AG04449 (cell line): ENCODE measurements at regions of chr4 and their contacts with region 1.

Region 1: DNA sequence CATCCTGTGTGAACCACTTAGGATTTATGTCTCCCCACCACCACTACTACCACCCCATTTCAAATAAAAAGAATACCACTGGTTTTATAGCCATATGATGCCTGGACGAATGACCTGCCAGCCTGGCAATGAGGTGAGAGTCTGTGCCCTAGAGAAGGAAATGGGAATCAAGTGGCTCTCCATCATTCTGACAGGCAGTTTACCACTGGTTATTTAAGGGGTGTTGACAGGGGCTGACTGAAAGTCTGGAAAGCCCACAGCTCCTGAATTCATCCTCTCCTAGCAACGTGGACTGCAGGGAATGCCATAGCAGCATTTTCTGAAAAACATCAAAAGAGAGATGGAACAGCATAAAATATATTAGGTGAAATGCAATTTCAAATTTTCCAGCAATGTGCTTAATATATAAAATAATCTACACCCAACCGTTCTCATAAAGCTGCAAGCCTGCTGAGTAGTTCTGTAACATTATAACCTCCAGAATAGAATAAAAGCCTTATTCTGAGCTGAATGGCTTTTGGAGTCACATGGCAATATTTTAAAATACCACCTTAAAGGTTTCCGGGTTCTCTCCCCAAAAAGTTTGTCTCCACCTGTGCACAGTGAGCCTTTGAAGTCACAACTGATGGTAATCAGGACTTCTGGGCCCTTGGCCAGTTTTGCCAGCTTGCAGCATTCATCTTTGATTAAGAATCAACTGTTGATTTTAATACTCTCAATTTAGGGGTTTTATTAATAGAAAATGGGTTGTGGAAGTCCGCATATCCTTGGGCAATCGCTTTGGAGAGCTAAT is 121.5 kb downstream of the DCTD start:
- DNase-seq: no peak
- H3K4me3 ChIP-seq: no peak overlapping the region
- CTCF ChIP-seq: no peak

Region 2: DNA sequence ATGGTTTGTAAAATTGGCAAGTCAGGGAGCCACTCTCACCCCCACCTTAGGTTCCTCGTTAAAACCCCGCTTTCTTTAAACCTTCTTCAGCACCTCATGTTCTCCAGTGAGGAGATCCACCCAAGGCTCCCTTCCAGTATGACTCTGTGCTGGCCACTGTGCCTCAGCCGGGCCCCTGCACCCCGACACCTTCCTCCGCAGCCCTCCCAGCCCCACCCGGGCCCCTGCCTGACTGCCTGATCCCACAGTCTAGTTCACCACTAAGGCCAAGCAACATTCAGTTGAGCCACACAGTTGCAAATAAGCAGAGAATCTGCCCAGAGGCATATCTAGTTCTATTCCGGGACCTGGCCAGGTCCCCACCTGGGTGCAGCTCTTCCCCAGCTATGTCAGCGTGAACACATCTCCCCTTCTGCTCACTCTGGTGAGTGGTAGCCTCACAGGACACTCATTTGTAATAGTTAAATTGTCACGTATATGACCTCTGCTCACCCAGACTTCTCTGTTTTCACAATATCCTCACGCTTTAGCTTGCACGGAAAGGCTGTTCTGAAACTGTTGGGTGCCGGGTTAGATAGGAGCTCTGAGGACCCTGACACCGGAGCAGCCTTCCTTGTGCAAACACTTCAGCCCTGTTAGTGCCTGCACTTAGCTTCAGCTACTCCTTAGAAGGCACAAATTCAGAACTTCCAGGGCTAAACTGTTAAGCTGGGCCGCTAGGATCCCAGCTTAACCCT is 25.2 kb before region 1 on chr4:
- CTCF ChIA-PET with region 1: no interaction called
- POLR2A ChIA-PET with region 1: no interaction called
- DNase-seq: no peak
- H3K4me3 ChIP-seq: no peak overlapping the region
- CTCF ChIP-seq: no peak

Region 3: GRCh38 chr4:182806259-182807252 is 10.9 kb after region 1 on chr4:
- CTCF ChIA-PET with region 1: interaction called, 13 read pairs
- POLR2A ChIA-PET with region 1: no interaction called
- DNase-seq: no peak
- H3K4me3 ChIP-seq: peak overlapping the region; percentile 58
- CTCF ChIP-seq: peak; percentile 97